AG04449 (cell line): ENCODE measurements at regions of chr12 and their contacts with region 1.

Region 1: GRCh38 chr12:104137913-104138796 is at the start of gene NFYB:
- DNase-seq: peak; percentile 87
- H3K4me3 ChIP-seq: peak within 1 kb of the TSS; percentile 86
- CTCF ChIP-seq: no peak

Region 2: DNA sequence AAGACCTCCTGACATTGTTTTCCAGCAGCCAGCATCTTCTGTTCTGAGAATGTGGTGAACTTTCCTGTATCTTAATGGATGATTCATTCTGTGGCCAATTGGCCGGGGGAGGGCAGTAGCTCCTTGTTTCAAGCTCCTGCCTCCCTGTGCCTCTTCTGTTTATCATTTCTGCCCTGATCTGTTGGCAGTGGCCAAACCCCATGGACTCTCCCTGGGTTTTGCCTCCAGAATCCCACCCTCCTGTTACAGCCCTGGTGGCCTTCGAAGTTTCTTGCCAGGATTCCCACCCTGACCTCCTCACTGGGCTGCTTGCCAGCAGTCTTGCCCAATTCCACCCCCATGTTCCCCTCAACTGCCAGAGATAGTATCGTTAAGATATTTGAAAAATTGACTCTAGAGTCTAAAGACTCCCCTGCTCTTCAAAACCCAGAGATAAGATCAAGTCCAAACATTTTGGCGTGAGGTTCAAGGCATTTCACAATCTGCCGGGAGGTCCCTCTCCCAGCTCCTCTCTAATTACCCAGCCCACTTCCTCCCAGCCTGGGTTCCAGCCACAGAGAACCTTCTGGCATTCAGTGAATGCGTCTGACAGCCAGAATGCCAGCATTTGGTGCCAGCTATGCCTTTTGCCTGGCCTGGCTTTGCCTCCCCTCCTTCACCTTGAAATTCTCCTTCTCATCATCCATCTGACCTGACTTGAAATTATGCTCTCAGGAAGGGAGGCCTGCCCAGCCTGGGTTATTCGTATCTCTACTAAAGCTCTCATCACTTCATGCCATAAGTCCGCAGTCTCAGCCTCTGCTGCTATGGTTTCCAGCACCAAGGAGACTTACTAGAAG is 39.7 kb after region 1 on chr12:
- CTCF ChIA-PET with region 1: interaction called, 3 read pairs
- POLR2A ChIA-PET with region 1: interaction called, 10 read pairs
- DNase-seq: peak; percentile 97
- H3K4me3 ChIP-seq: no peak overlapping the region
- CTCF ChIP-seq: peak; percentile 38

Region 3: GRCh38 chr12:104347374-104348075 is 209.4 kb after region 1 on chr12:
- CTCF ChIA-PET with region 1: no interaction called
- POLR2A ChIA-PET with region 1: no interaction called
- DNase-seq: no peak
- H3K4me3 ChIP-seq: no peak overlapping the region
- CTCF ChIP-seq: no peak